ENCODE measurements at regions of chr10 and their contacts with region 1.

Region 1: DNA sequence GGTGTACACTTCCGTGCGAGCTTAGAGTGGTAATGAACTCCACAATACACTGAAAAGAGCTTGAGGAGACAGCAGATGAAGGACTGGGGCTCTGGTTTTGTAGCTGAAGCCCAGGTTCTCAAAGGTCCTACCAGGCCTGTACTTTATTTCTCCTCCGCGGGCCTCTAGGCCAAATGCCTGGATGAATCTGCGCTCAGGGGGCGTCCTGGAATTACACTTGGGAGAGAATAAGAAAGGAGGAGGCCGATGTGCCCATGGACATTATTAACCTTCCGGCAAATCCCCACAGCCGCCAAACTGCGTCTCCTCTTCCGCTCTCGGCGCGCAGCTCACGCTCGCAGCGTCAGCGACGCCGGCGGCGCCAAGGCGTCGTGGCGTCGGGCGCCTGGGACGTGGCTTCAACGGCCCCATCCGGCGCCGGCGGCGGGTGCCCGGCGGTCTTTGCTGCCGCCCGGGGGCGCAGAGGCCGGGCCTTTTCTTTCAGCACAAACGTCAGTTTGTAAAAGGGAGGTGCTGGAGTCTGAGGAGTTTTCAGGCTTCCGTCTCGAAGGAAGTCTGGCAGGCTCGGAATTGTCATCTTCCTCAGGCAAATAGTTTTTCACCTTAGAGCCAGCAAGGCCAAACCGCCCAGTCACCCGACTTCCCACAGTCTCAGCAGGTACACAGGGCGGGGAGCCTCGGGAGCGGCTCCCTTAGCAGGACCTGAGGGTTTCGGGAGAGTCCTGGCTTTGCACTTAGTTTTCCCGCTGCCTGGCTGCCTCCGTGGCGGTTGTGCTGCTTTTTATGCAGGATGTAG is at the start of gene CCDC7:
- DNase-seq: peak; percentile 74 to 91 (median 79)
- H3K4me3 ChIP-seq: peak within 1 kb of the TSS; percentile 55
- H3K27ac ChIP-seq: peak within 1 kb of the TSS; percentile 75 to 98
- H3K4me1 ChIP-seq: no peaks in the 10 kb centered on the region
- H3K27me3 ChIP-seq: no peaks in the 10 kb centered on the region
- CTCF ChIP-seq: peak; percentile 34 to 50 (median 45)
- EP300 ChIP-seq: no peak
- POLR2A ChIP-seq: peak; percentile 28
- total RNA-seq, gene CCDC7: 33.3 to 83.4 (median 48.9) TPM

Region 2: DNA sequence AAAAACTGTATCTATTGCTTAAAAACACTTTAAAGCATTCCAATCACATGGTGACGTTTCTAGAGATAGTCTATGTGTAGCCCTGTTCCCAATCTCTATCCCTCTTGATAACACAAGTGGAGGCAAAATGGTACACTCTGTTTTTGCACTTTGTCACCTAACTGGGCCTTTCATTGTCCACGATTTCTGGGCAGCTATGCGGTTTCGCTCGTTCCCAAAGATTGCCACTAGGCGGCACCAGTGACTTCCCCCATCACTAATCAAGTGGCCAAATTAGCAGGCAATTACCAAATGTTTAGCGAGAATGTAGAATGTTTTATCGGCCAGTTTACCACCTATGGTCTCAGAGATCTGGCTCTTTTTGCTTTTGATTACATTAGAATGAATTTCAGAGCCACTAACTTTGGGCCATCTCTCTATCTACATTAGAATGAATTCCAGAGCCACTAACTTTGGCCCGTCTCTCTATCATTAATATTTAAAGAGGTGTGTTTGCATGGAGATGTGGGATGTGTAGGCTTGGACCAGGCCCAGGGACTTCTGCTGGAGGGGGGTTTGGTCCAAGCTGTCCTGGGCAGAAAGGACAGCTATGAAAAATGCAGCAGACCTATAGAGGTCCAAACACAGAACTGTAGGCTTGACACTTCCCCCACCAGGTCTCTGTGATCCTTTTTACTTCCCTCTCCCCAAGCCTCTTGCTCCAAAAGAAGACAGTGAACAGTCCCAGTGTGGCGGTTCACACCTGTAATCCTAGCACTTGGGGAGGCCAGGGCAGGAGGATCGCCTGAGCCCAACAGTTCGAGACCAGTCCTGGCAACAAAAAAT is 189.1 kb before region 1 on chr10:
- intact Hi-C with region 1: loop called in 2 of 4 experiments (anchors 10 kb)
- DNase-seq: peak; percentile 43 to 77 (median 72)
- H3K4me3 ChIP-seq: no peak overlapping the region
- H3K27ac ChIP-seq: no peak overlapping the region
- H3K4me1 ChIP-seq: peaks cover 1% of the 10 kb centered on the region
- H3K27me3 ChIP-seq: no peaks in the 10 kb centered on the region
- CTCF ChIP-seq: peak; percentile 58 to 80 (median 78)
- EP300 ChIP-seq: no peak
- POLR2A ChIP-seq: no peak

Region 3: DNA sequence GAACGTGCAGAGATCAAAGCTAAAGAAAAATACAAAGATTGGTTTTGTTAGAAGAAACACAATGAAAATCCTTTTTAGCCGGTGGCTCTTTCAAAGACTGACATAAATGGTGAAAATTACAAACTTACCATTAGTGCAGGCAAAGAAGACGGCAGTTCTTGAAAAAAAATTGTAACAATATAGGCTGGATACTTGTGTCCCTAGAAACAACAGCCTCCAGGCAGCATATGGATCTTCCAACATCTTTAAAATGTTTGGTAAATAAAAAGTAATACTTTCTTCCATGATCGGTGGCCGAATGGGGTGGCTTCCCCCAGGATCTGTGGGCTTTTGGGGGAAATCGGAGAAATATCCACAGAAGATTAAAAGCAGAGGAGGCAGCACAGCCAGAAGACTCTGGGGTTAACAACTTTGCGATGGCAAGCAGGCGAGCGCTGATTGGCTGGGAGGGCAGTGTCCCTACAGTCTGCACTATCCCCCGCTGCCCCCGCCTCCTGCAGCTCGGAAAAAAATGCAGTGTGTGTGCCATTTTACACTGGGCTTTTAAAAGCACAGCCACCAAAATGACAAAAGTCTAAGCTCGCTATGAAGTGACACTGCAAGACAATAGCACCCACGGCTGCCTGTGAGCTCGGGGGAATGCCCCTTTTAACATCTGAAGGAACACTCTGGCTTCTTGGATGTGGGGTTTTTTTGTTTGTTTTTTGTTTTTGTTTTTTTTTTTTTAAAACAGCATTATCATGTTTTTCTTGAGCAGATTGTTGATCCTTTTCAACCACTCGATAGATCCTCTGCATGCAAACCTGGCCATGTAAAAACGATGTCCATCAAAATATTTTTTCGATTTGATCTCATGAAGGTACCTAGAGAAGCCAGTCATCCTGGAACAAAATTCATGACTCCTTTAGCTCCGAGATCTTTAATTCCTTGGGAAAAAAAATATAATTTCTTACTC is 67.3 kb before region 1 on chr10:
- intact Hi-C with region 1: loop called in 2 of 4 experiments (anchors 5 to 10 kb)
- DNase-seq: peak; percentile 82 to 90 (median 89)
- H3K4me3 ChIP-seq: peak overlapping the region; percentile 73
- H3K27ac ChIP-seq: peak overlapping the region; percentile 24 to 43
- H3K4me1 ChIP-seq: peaks cover 1% of the 10 kb centered on the region
- H3K27me3 ChIP-seq: no peaks in the 10 kb centered on the region
- CTCF ChIP-seq: no peak
- EP300 ChIP-seq: no peak
- POLR2A ChIP-seq: no peak

Region 4: GRCh38 chr10:32386623-32387260 is 59.2 kb before region 1 on chr10:
- intact Hi-C with region 1: loop called in 1 of 4 experiments (anchors 10 kb)
- DNase-seq: no peak
- H3K4me3 ChIP-seq: no peak overlapping the region
- H3K27ac ChIP-seq: no peak overlapping the region
- H3K4me1 ChIP-seq: peaks cover 2% of the 10 kb centered on the region
- H3K27me3 ChIP-seq: no peaks in the 10 kb centered on the region
- CTCF ChIP-seq: no peak
- EP300 ChIP-seq: no peak
- POLR2A ChIP-seq: no peak

Measured in ovary (tissue), 10 donors.